IMR-90 (cell line): ENCODE measurements at regions of chr10 and their contacts with region 1.

Region 1: DNA sequence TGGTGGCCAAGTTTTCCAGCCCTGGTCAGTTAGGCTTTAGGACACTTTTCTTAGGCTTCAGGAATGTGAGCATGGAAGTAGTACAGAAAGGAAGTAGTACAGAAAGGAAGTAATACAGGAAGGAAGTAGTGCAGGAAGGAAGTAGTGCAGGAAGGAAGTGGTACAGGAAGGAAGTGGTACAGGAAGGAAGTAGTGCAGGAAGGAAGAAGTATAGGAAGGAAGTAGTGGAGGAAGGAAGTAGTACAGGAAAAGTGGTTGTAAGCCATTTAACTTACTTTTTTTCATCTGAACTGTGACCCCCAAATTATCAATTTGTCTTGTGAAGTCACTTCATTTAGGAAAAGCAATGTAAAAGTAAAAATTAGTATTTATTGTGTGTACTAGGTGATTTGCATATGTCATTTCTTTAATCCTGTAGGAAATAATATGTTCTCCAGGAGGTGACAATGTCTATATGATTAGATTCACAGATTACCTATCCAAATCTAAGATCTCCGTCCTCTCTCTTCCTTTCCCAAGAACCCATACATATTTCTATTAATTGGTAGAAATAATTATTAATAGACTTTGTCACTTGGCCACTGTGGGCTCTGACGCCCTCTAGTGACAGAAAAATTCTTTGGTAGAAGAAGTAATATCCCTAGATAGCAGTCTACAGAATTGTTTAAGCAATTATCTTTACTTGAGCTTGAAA is 3.9 kb upstream of the FAS start:
- DNase-seq: peak; percentile 37
- ATAC-seq: no peak
- H3K4me3 ChIP-seq: no peak overlapping the region
- H3K27ac ChIP-seq: no peak overlapping the region
- H3K4me1 ChIP-seq: peaks cover 8% of the 10 kb centered on the region
- H3K27me3 ChIP-seq: no peaks in the 10 kb centered on the region
- CTCF ChIP-seq: peak; percentile 82
- POLR2A ChIP-seq: no peak
- RAD21 ChIP-seq: peak; percentile 77

Region 2: DNA sequence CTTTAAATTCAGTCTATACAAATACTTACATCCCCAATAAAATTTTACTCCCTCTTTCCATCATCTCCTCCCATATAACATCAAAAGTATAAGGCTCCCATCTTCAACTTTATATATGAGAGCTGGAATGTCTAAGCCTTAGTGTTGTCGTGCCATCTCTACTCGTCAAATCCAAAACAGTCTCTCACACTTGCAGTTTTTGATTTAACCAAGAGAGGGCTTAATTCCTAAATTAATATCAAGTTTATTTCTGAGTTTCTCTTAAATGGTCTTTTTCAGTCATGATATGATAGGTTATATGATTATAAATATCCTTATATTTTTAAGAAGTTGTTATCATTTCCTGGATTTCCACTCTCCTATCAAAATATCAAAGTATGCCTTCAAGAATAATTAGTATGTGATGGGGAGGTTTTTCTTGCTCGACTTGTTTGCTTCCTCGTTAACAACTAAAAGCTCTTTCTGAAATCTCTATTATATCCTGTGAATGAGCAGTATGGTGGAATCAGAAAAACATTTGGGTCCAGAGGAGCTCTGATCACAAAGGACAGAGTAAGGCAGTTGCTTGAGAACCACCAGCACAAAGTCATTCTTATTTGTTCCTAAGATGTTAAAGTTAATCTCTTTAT is 293.2 kb before region 1 on chr10:
- CTCF ChIA-PET with region 1: no interaction called
- POLR2A ChIA-PET with region 1: no interaction called
- dilution Hi-C with region 1: no loop called
- in situ Hi-C with region 1: no loop called
- intact Hi-C with region 1: loop called (anchors 5 kb)
- DNase-seq: no peak
- ATAC-seq: no peak
- H3K4me3 ChIP-seq: no peak overlapping the region
- H3K27ac ChIP-seq: no peak overlapping the region
- H3K4me1 ChIP-seq: no peaks in the 10 kb centered on the region
- H3K27me3 ChIP-seq: peaks cover 13% of the 10 kb centered on the region
- CTCF ChIP-seq: 0 out of 2 replicates have a peak, but pooled peaks have one; percentile 13
- POLR2A ChIP-seq: no peak
- RAD21 ChIP-seq: no peak

Region 3: GRCh38 chr10:88835096-88835909 is 151.4 kb before region 1 on chr10:
- CTCF ChIA-PET with region 1: interaction called, 4 read pairs
- POLR2A ChIA-PET with region 1: no interaction called
- dilution Hi-C with region 1: no loop called
- in situ Hi-C with region 1: no loop called
- intact Hi-C with region 1: loop called (anchors 2 kb)
- DNase-seq: peak; percentile 89
- ATAC-seq: peak; percentile 98
- H3K4me3 ChIP-seq: no peak overlapping the region
- H3K27ac ChIP-seq: no peak overlapping the region
- H3K4me1 ChIP-seq: no peaks in the 10 kb centered on the region
- H3K27me3 ChIP-seq: no peaks in the 10 kb centered on the region
- CTCF ChIP-seq: peak; percentile 96
- POLR2A ChIP-seq: peak; percentile 38
- RAD21 ChIP-seq: peak; percentile 99

Region 4: DNA sequence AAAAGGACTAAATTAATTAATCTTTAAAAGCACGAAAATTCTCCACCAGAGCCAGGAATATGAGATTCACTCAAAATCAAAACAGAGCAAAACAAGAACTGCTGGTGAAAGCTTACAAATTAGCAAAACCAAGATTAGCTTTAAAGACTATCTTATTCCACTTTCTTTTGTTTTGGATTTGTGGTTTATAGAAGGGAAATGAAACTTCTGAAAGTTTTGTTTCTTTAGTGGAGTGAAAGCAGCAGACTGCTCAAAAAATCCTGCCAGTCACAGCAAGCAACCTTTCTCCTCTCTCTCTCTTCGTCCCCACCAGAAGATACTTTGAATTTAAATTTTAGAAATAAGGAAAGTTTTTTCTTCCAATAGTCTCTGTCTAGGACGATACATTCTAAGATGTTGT is 41.9 kb before region 1 on chr10:
- CTCF ChIA-PET with region 1: interaction called, 9 read pairs
- POLR2A ChIA-PET with region 1: interaction called, 7 read pairs
- dilution Hi-C with region 1: no loop called
- in situ Hi-C with region 1: loop called (anchors 5 kb)
- intact Hi-C with region 1: no loop called
- DNase-seq: no peak
- ATAC-seq: no peak
- H3K4me3 ChIP-seq: no peak overlapping the region
- H3K27ac ChIP-seq: no peak overlapping the region
- H3K4me1 ChIP-seq: peaks cover 5% of the 10 kb centered on the region
- H3K27me3 ChIP-seq: no peaks in the 10 kb centered on the region
- CTCF ChIP-seq: no peak
- POLR2A ChIP-seq: no peak
- RAD21 ChIP-seq: no peak